Left cardiac atrium (tissue), 4 donors: ENCODE measurements at regions of chr11 and their contacts with region 1.

Region 1: DNA sequence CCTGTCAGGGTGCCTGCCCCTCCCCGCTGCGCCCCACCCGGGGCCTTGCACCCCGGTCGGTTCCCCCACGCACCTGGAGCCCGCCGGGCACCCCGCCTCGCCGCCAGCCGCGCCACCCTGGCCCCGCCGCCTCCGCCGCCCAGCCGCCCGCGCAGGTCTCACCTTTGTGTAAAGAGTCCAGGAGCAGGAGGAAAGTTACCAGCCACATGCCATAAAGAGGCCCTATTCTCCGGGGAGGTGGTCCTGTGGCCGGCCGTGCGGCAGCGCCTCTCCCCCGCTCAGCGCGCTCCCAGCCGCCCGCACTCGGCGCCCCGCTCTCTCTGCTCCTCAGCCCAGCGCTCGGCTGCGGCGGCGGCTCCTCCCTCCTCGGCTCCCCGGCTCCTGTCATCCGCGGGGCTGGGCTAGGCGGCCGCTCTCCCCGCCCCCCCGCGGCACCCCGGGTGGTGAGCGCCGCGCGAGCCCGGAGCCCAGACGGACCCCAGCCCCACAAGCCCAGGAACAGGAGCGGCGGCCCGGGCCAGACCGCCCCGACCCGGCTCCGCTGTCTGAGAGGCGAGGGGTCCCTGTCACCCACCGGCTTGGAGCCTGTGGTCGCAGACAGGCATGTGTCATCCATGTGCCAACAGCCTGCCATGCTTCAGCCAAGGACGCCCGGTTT is at the start of gene DSCAML1:
- DNase-seq: peak; percentile 59
- ATAC-seq: peak; percentile 88 to 92
- total RNA-seq, gene DSCAML1: 0.76 to 0.88 TPM

Region 2: GRCh38 chr11:117621226-117621625 is 175.8 kb before region 1 on chr11:
- intact Hi-C with region 1: loop called in 1 of 2 experiments (anchors 10 kb)
- DNase-seq: no peak
- ATAC-seq: no peak